Natural killer cell (primary cell): ENCODE measurements at regions of chr15 and their contacts with region 1.

Region 1: DNA sequence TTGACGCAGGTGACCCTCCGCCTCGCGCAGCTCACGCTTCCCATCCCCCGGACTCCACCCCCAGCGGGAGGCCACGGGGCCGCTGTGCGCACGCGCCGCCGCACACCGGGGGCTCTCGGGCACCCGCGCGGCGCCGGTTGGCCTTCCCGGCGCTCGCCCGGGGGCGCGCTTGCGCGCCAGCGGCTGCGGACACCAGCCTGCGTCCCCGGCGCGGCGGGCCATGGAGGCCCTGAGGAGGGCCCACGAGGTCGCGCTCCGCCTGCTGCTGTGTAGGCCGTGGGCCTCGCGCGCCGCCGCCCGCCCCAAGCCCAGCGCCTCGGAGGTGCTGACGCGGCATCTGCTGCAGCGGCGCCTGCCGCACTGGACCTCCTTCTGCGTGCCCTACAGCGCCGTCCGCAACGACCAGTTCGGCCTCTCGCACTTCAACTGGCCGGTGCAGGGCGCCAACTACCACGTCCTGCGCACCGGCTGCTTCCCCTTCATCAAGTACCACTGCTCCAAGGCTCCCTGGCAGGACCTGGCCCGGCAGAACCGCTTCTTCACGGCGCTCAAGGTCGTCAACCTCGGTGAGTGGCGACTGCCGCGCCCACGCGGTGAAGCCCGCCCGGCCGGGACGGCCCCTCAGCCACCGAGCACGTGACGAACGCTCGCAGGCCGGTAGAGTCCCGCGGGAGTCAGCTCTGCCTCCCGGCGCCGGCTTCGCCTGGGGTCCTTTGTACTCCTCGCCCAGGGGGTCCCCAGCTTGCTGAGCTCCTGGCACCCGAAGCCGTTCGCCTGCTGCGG is at the start of gene C15orf61:
- DNase-seq: peak; percentile 83 to 93
- ATAC-seq: peak; percentile 79 to 89 (median 81)
- H3K4me3 ChIP-seq: peak within 1 kb of the TSS; percentile 71
- H3K4me3 Mint-ChIP-seq: peak within 1 kb of the TSS; percentile 93
- H3K27ac ChIP-seq: peak within 1 kb of the TSS; percentile 97
- H3K27ac Mint-ChIP-seq: peak within 1 kb of the TSS; percentile 93 to 96
- H3K4me1 ChIP-seq: peaks cover 9% of the 10 kb centered on the region
- H3K4me1 Mint-ChIP-seq: peaks cover 16 to 22% of the 10 kb centered on the region in 2 donors
- H3K27me3 ChIP-seq: no peaks in the 10 kb centered on the region
- H3K27me3 Mint-ChIP-seq: no peaks in the 10 kb centered on the region
- CTCF ChIP-seq: no peak
- total RNA-seq, gene C15orf61: 8.7 to 16.4 (median 12.6) TPM

Region 2: DNA sequence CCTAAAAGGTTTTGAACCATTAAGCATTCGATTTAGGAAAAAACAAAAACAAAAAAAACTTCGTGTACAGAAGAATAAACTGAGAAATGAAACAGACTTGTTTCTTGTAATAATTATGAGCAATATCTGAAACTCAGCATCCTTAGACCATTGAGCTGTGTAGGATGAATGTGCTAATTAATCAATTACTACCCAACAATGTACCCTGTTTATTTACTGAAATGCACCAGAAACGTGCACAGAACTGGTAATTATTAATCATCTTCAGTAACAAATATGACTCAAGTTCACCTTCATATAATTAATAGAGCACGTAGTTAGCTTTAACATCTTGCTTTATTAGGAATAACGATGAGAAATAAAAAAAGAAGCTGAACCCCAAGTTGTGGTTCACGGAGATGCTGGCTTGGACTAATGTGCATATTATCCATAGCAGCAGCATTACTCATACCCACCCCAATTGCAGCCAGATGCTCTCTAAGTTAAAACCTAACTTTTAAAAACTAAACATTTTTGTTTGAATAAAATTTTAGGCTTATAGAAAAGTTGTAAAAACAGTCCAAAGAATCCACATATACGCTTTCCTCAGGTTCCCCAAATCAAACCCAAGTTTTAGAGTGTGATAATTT is 10.5 kb before region 1 on chr15:
- intact Hi-C with region 1: no loop called
- DNase-seq: no peak
- ATAC-seq: no peak
- H3K4me3 ChIP-seq: no peak overlapping the region
- H3K4me3 Mint-ChIP-seq: no peak overlapping the region
- H3K27ac ChIP-seq: no peak overlapping the region
- H3K27ac Mint-ChIP-seq: no peak overlapping the region
- H3K4me1 ChIP-seq: no peaks in the 10 kb centered on the region
- H3K4me1 Mint-ChIP-seq: no peaks in the 10 kb centered on the region
- H3K27me3 ChIP-seq: no peaks in the 10 kb centered on the region
- H3K27me3 Mint-ChIP-seq: no peaks in the 10 kb centered on the region
- CTCF ChIP-seq: no peak

Region 3: DNA sequence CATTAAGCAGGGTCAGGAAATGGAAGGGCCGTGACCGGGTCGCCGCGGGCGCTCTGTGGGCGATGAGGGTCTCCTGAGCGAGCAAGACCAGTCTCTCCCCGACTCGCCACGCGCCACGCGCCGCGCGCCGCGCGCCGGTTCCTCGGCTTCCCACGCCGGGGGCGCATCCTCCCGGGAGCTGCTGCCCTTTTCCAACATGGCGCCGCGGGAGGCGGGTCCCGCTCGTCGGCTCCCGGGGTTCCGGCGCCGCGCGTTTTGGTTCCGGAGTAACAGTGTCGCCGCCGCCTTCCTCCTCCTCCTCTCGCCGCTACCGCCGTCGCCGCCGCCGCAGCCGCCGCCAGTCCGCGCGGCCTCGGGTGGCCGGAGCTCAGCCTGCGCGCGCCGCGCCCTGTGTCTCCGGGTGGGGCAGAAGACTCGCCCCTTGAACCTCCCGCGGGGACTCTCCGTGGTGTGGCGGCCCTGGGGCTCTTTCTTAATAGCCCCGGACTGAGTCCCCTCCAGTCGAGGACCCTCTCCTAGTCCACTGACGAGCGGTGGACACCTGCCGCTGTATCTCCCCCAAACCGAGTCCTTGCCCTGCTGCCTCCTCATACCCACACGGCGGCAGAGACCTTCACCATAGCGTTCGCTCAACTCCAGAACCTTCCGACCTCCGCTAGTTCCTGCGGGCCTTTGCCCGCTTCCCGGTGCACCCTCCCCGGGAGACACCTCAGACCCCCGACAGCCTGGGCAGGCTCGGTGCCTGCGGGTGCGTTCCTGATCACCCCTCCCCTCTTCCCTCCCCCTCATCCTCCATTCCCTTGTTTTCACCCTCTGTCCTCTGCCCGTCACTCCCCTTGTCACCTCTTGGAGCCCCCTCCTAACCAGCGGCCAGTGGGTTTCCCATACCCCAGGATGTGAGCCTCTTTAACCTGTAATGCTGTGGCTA is 21.5 kb after region 1 on chr15 and contains the start of gene MAP2K5:
- intact Hi-C with region 1: loop called (anchors 1 kb)
- DNase-seq: peak; percentile 75 to 90
- ATAC-seq: peak; percentile 75 to 83 (median 81)
- H3K4me3 ChIP-seq: peak within 1 kb of the TSS; percentile 68
- H3K4me3 Mint-ChIP-seq: peak within 1 kb of the TSS; percentile 96
- H3K27ac ChIP-seq: peak within 1 kb of the TSS; percentile 79
- H3K27ac Mint-ChIP-seq: peak within 1 kb of the TSS; percentile 95 to 96
- H3K4me1 ChIP-seq: peaks cover 13% of the 10 kb centered on the region
- H3K4me1 Mint-ChIP-seq: peaks cover 33 to 40% of the 10 kb centered on the region in 2 donors
- H3K27me3 ChIP-seq: no peaks in the 10 kb centered on the region
- H3K27me3 Mint-ChIP-seq: no peaks in the 10 kb centered on the region
- CTCF ChIP-seq: no peak
- total RNA-seq, gene MAP2K5: 25.6 to 32.6 (median 29.2) TPM